Caco-2 (cell line): ENCODE measurements at regions of chr1 and their contacts with region 1.

Region 1: GRCh38 chr1:241834733-241835377 is 13.1 kb upstream of the EXO1 start:
- DNase-seq: peak in 1 of 2 experiments; percentile 23
- H3K4me3 ChIP-seq: no peak overlapping the region
- H3K4me3 Mint-ChIP-seq: no peak overlapping the region
- H3K27ac Mint-ChIP-seq: no peak overlapping the region
- H3K4me1 ChIP-seq: no peaks in the 10 kb centered on the region
- H3K4me1 Mint-ChIP-seq: peaks cover 10% of the 10 kb centered on the region
- H3K27me3 ChIP-seq: no peaks in the 10 kb centered on the region
- H3K27me3 Mint-ChIP-seq: peaks cover 4% of the 10 kb centered on the region
- CTCF ChIP-seq: peak; percentile 68 to 79

Region 2: DNA sequence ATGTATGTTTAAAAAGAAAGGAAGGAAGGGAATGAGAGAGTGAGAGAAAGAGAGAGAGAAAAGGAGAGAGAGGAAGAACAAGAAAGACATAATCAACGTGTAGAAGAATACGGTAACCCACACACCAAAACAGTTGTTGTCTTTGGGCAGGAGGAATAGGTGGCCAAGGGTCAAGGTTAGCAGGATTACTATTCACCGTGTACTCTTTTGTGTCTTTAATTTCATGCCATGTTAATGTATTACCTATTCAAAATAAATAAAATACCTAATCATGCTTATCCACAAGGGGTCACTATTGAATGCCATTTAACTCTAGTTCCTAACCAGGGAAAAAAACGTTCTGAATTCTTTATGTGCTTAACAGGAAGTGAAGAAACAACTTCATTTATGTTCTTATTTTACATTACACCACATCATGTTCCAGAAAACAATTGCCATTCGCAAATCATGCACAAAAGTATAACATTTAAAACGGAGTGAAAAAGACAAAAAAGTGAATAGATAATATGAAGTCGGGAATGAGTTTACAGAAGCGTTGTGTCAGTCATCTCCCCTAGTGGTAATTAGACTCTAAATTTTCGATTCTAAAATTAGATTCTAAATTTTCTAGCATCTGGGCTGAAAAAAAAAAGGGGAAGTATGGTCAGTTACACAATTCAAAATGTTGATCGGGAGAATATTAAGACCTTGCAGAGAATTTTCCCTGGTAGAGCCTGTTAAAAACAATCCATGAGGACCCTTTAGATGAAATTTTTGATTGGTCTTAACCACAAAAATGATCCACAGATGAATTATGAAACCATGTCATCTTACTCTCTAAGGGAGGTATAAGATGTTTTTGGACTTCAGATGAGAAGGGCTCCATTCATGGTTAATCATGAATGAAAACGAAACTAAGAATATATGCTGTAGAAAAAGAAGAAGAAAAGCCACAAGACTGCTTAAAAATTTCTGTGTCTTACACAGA is 303.4 kb before region 1 on chr1:
- CTCF ChIA-PET with region 1: no interaction called
- POLR2A ChIA-PET with region 1: no interaction called
- intact Hi-C with region 1: loop called (anchors 1 kb)
- DNase-seq: peak in 1 of 2 experiments; percentile 36
- H3K4me3 ChIP-seq: peak overlapping the region; percentile 41
- H3K4me3 Mint-ChIP-seq: peak overlapping the region; percentile 86
- H3K27ac Mint-ChIP-seq: peak overlapping the region; percentile 31
- H3K4me1 ChIP-seq: no peaks in the 10 kb centered on the region
- H3K4me1 Mint-ChIP-seq: peaks cover 13% of the 10 kb centered on the region
- H3K27me3 ChIP-seq: no peaks in the 10 kb centered on the region
- H3K27me3 Mint-ChIP-seq: peaks cover 13% of the 10 kb centered on the region
- CTCF ChIP-seq: peak; percentile 26 to 49

Region 3: GRCh38 chr1:241551759-241552638 is 282.9 kb before region 1 on chr1:
- CTCF ChIA-PET with region 1: no interaction called
- POLR2A ChIA-PET with region 1: no interaction called
- intact Hi-C with region 1: no loop called
- DNase-seq: no peak
- H3K4me3 ChIP-seq: no peak overlapping the region
- H3K4me3 Mint-ChIP-seq: no peak overlapping the region
- H3K27ac Mint-ChIP-seq: no peak overlapping the region
- H3K4me1 ChIP-seq: no peaks in the 10 kb centered on the region
- H3K4me1 Mint-ChIP-seq: no peaks in the 10 kb centered on the region
- H3K27me3 ChIP-seq: no peaks in the 10 kb centered on the region
- H3K27me3 Mint-ChIP-seq: peaks cover 8% of the 10 kb centered on the region
- CTCF ChIP-seq: no peak

Region 4: GRCh38 chr1:241605146-241605805 is 229.6 kb before region 1 on chr1:
- CTCF ChIA-PET with region 1: interaction called, 3 read pairs
- POLR2A ChIA-PET with region 1: no interaction called
- intact Hi-C with region 1: loop called (anchors 1 kb)
- DNase-seq: no peak
- H3K4me3 ChIP-seq: no peak overlapping the region
- H3K4me3 Mint-ChIP-seq: no peak overlapping the region
- H3K27ac Mint-ChIP-seq: no peak overlapping the region
- H3K4me1 ChIP-seq: peaks cover 6% of the 10 kb centered on the region
- H3K4me1 Mint-ChIP-seq: no peaks in the 10 kb centered on the region
- H3K27me3 ChIP-seq: no peaks in the 10 kb centered on the region
- H3K27me3 Mint-ChIP-seq: no peaks in the 10 kb centered on the region
- CTCF ChIP-seq: peak in 1 of 2 experiments; percentile 31